Activated naive CD8-positive, alpha-beta T cell treated with anti-CD3 and anti-CD28 coated beads, Interleukin-2, amount 10 ng/mL, durations not matched to agents 7 days and 5 days (primary cell): ENCODE measurements at regions of chr1 and their contacts with region 1.

Region 1: DNA sequence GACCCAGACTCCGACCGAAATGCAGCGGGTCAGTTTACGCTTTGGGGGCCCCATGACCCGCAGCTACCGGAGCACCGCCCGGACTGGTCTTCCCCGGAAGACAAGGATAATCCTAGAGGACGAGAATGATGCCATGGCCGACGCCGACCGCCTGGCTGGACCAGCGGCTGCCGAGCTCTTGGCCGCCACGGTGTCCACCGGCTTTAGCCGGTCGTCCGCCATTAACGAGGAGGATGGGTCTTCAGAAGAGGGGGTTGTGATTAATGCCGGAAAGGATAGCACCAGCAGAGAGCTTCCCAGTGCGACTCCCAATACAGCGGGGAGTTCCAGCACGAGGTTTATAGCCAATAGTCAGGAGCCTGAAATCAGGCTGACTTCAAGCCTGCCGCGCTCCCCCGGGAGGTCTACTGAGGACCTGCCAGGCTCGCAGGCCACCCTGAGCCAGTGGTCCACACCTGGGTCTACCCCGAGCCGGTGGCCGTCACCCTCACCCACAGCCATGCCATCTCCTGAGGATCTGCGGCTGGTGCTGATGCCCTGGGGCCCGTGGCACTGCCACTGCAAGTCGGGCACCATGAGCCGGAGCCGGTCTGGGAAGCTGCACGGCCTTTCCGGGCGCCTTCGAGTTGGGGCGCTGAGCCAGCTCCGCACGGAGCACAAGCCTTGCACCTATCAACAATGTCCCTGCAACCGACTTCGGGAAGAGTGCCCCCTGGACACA is 534 bp downstream of the C1orf56 start:
- DNase-seq: peak; percentile 74
- ATAC-seq: peak; percentile 86
- H3K4me3 Mint-ChIP-seq: peak overlapping the region; percentile 89
- H3K27ac Mint-ChIP-seq: peak overlapping the region; percentile 85
- H3K4me1 Mint-ChIP-seq: peaks cover 13% of the 10 kb centered on the region
- H3K27me3 Mint-ChIP-seq: no peaks in the 10 kb centered on the region

Region 2: GRCh38 chr1:150979092-150980056 is 68.7 kb before region 1 on chr1:
- POLR2A ChIA-PET with region 1: no interaction called
- DNase-seq: peak; percentile 83
- ATAC-seq: peak; percentile 57
- H3K4me3 Mint-ChIP-seq: peak overlapping the region; percentile 71
- H3K27ac Mint-ChIP-seq: peak overlapping the region; percentile 78
- H3K4me1 Mint-ChIP-seq: peaks cover 21% of the 10 kb centered on the region
- H3K27me3 Mint-ChIP-seq: peaks cover 2% of the 10 kb centered on the region

Region 3: DNA sequence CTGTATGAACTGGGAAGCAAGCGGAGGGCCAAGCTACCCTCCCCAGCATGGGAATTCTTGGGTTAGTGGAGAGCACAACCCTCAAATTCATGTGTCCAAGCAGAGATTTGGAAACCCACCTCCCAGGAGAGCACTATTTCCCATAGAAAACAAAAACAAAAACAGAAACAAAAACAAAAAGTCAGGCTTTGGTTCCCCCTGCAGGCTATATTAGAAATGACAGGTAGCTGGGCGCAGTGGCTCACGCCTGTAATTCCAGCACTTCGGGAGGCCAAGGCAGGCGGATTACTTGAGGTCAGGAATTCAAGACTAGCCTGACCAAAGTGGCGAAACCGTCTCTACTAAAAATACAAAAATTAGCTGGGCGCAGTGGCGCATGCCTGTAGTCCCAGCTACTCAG is 52.2 kb before region 1 on chr1:
- POLR2A ChIA-PET with region 1: no interaction called
- DNase-seq: no peak
- ATAC-seq: no peak
- H3K4me3 Mint-ChIP-seq: no peak overlapping the region
- H3K27ac Mint-ChIP-seq: peak overlapping the region; percentile 21
- H3K4me1 Mint-ChIP-seq: peaks cover 12% of the 10 kb centered on the region
- H3K27me3 Mint-ChIP-seq: no peaks in the 10 kb centered on the region

Region 4: GRCh38 chr1:151024540-151025146 is 23.4 kb before region 1 on chr1:
- POLR2A ChIA-PET with region 1: interaction called, 14 read pairs
- DNase-seq: peak; percentile 80
- ATAC-seq: peak; percentile 100
- H3K4me3 Mint-ChIP-seq: peak overlapping the region; percentile 63
- H3K27ac Mint-ChIP-seq: peak overlapping the region; percentile 70
- H3K4me1 Mint-ChIP-seq: peaks cover 5% of the 10 kb centered on the region
- H3K27me3 Mint-ChIP-seq: no peaks in the 10 kb centered on the region